ENCODE measurements at regions of chr9 and their contacts with region 1.

Region 1: GRCh38 chr9:37903647-37904444 is at the start of gene SLC25A51:
- DNase-seq: peak; percentile 98
- H3K4me3 Mint-ChIP-seq: peak within 1 kb of the TSS; percentile 90
- H3K27ac Mint-ChIP-seq: peak within 1 kb of the TSS; percentile 95
- H3K4me1 Mint-ChIP-seq: peaks cover 19% of the 10 kb centered on the region
- H3K27me3 Mint-ChIP-seq: peaks cover 9% of the 10 kb centered on the region
- total RNA-seq, gene SLC25A51: 32.0 and 33.3 TPM in 2 replicates

Region 2: GRCh38 chr9:37465249-37466036 is 438.4 kb before region 1 on chr9 and contains the start of gene ZBTB5:
- intact Hi-C with region 1: loop called (anchors 1 kb)
- DNase-seq: peak; percentile 99
- H3K4me3 Mint-ChIP-seq: peak within 1 kb of the TSS; percentile 99
- H3K27ac Mint-ChIP-seq: peak within 1 kb of the TSS; percentile 98
- H3K4me1 Mint-ChIP-seq: peaks cover 35% of the 10 kb centered on the region
- H3K27me3 Mint-ChIP-seq: no peaks in the 10 kb centered on the region
- total RNA-seq, gene ZBTB5: 9.2 and 9.5 TPM in 2 replicates

Region 3: DNA sequence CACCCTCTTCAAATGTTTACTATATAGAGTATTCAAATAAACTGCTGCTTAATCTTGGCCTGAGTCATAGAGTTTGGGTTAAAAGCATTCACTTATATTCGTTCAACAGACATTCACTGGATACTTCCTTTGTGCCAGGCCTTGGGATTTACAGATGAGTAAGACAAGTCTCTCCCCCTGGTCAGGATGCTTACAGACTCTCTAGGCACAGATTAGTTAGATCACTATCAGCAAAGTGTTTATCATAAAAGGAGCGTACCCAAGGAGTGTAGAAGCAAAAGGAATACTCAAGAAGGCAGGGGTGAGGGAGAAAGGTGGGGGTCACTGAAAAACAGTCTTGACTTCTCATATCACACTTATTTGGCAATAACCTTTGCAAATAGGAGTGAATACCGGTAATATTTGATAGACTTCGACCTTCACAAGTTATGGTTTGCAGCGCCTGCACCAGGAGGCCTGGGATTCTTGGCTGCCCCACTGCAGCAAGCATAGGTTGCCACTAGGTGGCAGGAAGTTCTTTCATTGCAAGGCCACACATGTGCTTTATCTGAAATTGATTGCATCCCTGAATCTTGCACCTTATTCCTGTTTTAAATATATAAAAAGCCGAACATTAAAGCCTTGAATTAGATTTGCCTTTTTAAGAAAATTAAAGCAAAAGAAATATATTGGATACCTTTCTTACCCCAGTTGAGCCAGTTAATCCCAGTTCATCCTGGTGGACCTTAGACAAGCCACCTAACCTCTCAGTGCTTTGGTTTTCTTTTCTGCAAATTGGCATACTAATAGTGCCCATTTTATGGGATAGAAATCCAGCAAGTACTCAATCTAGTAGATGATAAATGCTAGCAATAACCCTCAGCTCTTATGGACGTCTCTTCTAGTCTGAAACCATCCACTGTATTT is 156.7 kb before region 1 on chr9:
- intact Hi-C with region 1: loop called (anchors 2 kb)
- DNase-seq: peak; percentile 88
- H3K4me3 Mint-ChIP-seq: no peak overlapping the region
- H3K27ac Mint-ChIP-seq: no peak overlapping the region
- H3K4me1 Mint-ChIP-seq: peaks cover 2% of the 10 kb centered on the region
- H3K27me3 Mint-ChIP-seq: no peaks in the 10 kb centered on the region

Region 4: DNA sequence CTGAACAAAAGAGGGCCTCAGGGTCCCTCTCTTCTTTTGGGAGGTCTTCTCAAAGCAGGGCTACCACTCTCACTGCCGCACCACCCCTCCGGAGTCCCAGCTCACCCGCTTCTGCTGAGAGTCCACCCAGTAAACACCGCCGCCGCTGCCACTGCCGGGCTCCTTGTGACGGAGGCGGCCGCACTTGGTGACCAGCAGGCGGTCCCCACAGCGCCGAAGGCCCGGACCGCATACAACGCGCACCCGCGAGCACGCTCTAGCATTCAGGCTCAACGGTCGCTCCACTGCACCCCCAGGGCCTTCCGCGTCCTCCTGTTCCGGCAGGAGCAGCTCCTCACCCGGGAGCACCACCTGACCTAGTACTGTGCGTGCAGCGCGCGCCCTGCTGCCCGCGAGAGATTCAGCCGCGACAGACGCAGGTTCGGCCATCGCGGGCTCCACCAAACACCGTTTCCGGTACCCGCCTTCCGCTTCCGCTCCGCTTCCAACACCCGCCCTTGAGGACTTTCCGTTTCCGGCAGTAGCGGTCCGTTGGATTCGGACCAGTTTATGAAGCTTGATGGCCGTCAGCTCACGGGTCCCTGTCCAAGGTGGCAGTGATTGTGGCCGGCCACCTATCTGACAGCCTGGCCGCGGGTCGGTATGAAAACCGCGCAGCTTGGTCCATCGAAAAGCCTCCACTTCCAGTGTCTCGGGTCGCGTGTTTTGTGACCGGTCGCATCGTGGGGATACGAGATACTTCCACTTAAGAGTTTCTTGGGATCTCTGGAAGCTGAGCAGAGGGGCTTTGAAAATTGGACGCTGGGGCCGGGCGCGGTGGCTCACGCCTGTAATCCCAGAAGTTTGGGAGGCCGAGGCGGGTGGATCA is 119.0 kb before region 1 on chr9 and contains the start of gene EXOSC3:
- intact Hi-C with region 1: loop called (anchors 1 kb)
- DNase-seq: peak; percentile 97
- H3K4me3 Mint-ChIP-seq: peak within 1 kb of the TSS; percentile 98
- H3K27ac Mint-ChIP-seq: peak within 1 kb of the TSS; percentile 97
- H3K4me1 Mint-ChIP-seq: peaks cover 19% of the 10 kb centered on the region
- H3K27me3 Mint-ChIP-seq: no peaks in the 10 kb centered on the region
- total RNA-seq, gene EXOSC3: 104 and 109 TPM in 2 replicates

Region 5: GRCh38 chr9:37953775-37954437 is 50.1 kb after region 1 on chr9:
- intact Hi-C with region 1: loop called (anchors 5 kb)
- DNase-seq: peak; percentile 69
- H3K4me3 Mint-ChIP-seq: peak overlapping the region; percentile 65
- H3K27ac Mint-ChIP-seq: peak overlapping the region; percentile 97
- H3K4me1 Mint-ChIP-seq: peaks cover 20% of the 10 kb centered on the region
- H3K27me3 Mint-ChIP-seq: no peaks in the 10 kb centered on the region

Region 6: GRCh38 chr9:38392235-38393127 is 488.6 kb after region 1 on chr9 and contains the start of gene ALDH1B1:
- intact Hi-C with region 1: loop called (anchors 10 kb)
- DNase-seq: peak; percentile 94
- H3K4me3 Mint-ChIP-seq: peak within 1 kb of the TSS; percentile 96
- H3K27ac Mint-ChIP-seq: peak within 1 kb of the TSS; percentile 91
- H3K4me1 Mint-ChIP-seq: peaks cover 17% of the 10 kb centered on the region
- H3K27me3 Mint-ChIP-seq: peaks cover 16% of the 10 kb centered on the region
- total RNA-seq, gene ALDH1B1: 35.2 and 36.5 TPM in 2 replicates

Measured in activated CD4-positive, alpha-beta T cell treated with anti-CD3 and anti-CD28 coated beads, Interleukin-2, amount 10 ng/mL, durations not matched to agents 24 days and 14 days (primary cell).